Activated CD4-positive, alpha-beta memory T cell treated with anti-CD3 and anti-CD28 coated beads for 36 hours (primary cell): ENCODE measurements at regions of chr5 and their contacts with region 1.

Region 1: DNA sequence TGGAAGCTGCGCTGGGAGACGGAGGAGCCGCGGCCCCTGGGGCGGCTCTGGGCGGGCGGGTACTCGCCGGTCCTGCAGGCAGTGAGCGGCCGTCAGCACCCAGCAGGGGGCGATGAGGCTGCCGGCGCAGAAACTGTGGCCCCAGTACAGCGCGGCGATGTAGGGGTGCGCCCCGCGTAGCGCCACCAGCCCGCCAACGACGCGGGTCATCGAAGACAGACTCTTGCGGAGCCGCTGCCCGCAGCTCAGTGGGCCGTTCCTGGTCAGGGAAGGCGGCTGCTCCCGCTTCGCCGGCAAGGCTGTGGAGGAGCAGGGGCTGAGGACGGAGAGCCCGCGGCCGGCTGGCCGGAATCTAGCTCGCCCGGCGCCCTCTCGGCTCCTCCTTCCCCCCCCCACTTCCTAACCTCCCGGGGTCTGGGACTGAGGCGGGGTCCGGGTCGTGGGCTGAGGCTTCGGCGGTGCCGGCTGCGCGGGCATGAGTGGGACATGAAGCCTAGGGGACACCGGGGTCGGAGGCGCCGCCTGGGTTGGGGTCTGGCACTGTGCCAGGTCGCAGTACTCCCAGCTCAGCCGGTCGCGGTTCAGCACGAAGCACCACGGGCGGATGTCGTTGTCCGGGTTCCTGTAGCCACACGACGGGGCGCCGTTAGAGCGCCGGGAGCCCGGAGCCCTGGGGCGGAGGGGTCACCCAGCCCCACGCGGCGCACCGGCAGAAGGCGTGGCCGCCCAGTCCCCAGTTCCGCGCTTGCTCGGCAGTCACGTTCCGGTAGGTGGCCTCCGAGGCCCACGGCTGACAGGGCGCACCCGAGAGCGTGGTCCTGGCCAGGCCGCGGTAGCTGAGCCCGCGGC is 3.6 kb upstream of the PFN3 start:
- DNase-seq: peak; percentile 91
- H3K4me3 Mint-ChIP-seq: peak overlapping the region; percentile 75
- H3K27ac Mint-ChIP-seq: no peak overlapping the region
- H3K4me1 Mint-ChIP-seq: peaks cover 22% of the 10 kb centered on the region
- H3K27me3 Mint-ChIP-seq: peaks cover 8% of the 10 kb centered on the region

Region 2: DNA sequence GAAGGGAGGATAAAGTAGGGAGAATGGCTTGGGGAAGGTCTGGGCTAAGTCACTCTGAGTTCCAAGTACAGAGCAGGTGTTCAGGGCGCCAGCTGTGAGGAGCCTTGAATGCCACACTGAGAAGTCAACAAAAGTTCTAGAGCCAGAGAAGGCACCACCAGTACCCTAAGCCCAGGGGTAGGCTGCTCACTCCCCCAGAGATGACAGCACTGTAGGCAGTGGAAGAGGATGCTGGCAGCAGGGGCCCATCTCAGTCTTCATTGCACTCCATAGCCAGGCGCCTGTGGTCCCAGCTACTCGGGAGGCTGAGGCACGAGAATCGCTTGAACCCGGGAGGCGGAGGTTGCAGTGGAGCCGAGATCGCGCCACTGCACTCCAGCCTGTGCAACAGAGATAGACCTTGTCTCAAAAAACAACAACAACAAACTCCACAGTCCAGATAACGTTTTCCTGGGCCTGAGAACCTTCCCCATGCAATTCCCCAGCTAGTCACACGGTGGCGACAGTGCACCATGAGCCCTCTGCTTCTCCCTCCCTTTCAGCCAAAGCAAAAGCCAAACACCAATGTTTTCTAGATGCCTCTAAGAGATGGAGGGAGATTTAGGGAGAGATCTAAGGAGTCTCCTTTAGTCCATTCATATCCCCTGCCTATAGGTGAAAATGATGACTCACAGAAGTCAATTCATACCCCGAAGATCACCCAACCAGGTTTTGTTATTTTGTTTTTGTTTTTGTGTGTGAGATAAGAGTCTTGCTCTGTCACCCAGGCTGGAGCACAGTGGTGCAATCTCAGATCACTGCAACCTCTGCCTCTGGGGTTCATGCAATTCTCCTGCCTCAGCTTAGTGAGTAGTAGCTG is 290.2 kb before region 1 on chr5:
- CTCF ChIA-PET with region 1: interaction called, 22 read pairs
- POLR2A ChIA-PET with region 1: no interaction called
- intact Hi-C with region 1: no loop called
- DNase-seq: peak; percentile 89
- H3K4me3 Mint-ChIP-seq: no peak overlapping the region
- H3K27ac Mint-ChIP-seq: no peak overlapping the region
- H3K4me1 Mint-ChIP-seq: peaks cover 21% of the 10 kb centered on the region
- H3K27me3 Mint-ChIP-seq: no peaks in the 10 kb centered on the region

Region 3: GRCh38 chr5:177351385-177352329 is 52.4 kb before region 1 on chr5 and contains the start of gene LMAN2:
- CTCF ChIA-PET with region 1: interaction called, 29 read pairs
- POLR2A ChIA-PET with region 1: interaction called, 6 read pairs
- intact Hi-C with region 1: no loop called
- DNase-seq: peak; percentile 95
- H3K4me3 Mint-ChIP-seq: peak within 1 kb of the TSS; percentile 96
- H3K27ac Mint-ChIP-seq: peak within 1 kb of the TSS; percentile 99
- H3K4me1 Mint-ChIP-seq: peaks cover 64% of the 10 kb centered on the region
- H3K27me3 Mint-ChIP-seq: no peaks in the 10 kb centered on the region
- total RNA-seq, gene LMAN2: 98.3 to 104 TPM

Region 4: GRCh38 chr5:177390363-177391300 is 13.4 kb before region 1 on chr5:
- CTCF ChIA-PET with region 1: interaction called, 223 read pairs
- POLR2A ChIA-PET with region 1: interaction called, 25 read pairs
- intact Hi-C with region 1: loop called (anchors 1 kb)
- DNase-seq: peak; percentile 94
- H3K4me3 Mint-ChIP-seq: peak overlapping the region; percentile 17
- H3K27ac Mint-ChIP-seq: peak overlapping the region; percentile 87
- H3K4me1 Mint-ChIP-seq: peaks cover 41% of the 10 kb centered on the region
- H3K27me3 Mint-ChIP-seq: no peaks in the 10 kb centered on the region

Region 5: GRCh38 chr5:177431317-177432142 is 27.5 kb after region 1 on chr5:
- CTCF ChIA-PET with region 1: interaction called, 624 read pairs
- POLR2A ChIA-PET with region 1: interaction called, 39 read pairs
- intact Hi-C with region 1: loop called (anchors 1 kb)
- DNase-seq: peak; percentile 84
- H3K4me3 Mint-ChIP-seq: peak overlapping the region; percentile 97
- H3K27ac Mint-ChIP-seq: peak overlapping the region; percentile 97
- H3K4me1 Mint-ChIP-seq: peaks cover 61% of the 10 kb centered on the region
- H3K27me3 Mint-ChIP-seq: no peaks in the 10 kb centered on the region

Region 6: GRCh38 chr5:177473461-177474001 is 69.5 kb after region 1 on chr5 and contains the start of gene DBN1:
- CTCF ChIA-PET with region 1: interaction called, 24 read pairs
- POLR2A ChIA-PET with region 1: no interaction called
- intact Hi-C with region 1: no loop called
- DNase-seq: peak; percentile 25
- H3K4me3 Mint-ChIP-seq: peak within 1 kb of the TSS; percentile 64
- H3K27ac Mint-ChIP-seq: no peak within 1 kb of the TSS
- H3K4me1 Mint-ChIP-seq: peaks cover 22% of the 10 kb centered on the region
- H3K27me3 Mint-ChIP-seq: peaks cover 5% of the 10 kb centered on the region
- total RNA-seq, gene DBN1: 12.1 to 15.9 TPM

Region 7: DNA sequence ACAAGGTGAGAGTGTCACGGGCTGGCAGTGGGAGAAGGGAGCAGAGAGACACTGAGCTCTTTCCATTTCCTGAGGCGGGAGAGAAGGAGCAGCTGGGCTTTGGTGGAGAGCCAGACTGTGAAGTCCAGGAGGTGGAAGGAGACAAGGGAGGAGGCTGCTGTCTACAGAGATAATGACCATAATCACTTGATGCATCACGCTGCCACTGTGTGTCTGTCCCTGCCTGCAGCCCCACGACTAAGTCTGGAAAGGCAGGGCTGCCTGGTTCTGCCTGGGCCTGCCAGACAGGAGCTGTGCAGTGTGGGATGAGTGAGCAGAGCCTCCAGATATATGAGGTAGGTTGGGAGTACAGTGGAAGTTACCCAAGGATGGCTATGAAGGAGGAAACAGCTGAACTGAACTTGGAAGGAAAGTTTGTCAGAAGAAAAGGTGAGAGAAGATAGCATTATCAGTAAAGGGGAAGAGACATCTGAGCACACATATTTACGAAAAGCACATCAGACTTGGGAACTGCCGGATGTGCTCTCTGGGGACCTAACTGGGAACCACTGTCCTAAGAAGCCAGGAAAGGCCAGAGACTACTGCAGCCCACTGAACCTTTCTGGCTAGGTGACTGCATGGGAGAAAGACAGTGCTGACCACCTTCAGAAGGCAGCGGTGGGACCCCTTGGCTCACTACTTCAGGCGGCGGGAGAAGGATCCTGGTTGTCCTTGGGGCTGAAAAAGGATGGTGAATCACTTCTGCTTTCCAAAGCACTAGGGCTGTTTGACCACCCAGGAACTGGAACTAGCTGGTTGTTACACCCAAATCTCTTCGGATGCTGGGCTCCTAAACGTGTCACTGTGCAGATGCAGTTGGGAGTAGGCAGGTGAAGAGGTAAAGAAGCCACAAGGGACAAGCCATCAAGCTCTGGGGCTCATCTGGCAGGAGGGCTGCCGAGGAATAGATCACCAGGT is 125.5 kb after region 1 on chr5:
- CTCF ChIA-PET with region 1: no interaction called
- POLR2A ChIA-PET with region 1: no interaction called
- intact Hi-C with region 1: no loop called
- DNase-seq: no peak
- H3K4me3 Mint-ChIP-seq: no peak overlapping the region
- H3K27ac Mint-ChIP-seq: no peak overlapping the region
- H3K4me1 Mint-ChIP-seq: no peaks in the 10 kb centered on the region
- H3K27me3 Mint-ChIP-seq: no peaks in the 10 kb centered on the region